A549 (cell line): ENCODE measurements at regions of chr7 and their contacts with region 1.

Region 1: GRCh38 chr7:28853834-28854749 is 104.0 kb downstream of the TRIL start:
- DNase-seq: peak; percentile 66 to 91
- ATAC-seq: peak; percentile 89 to 98
- H3K4me3 ChIP-seq: peak overlapping the region; percentile 52
- H3K27ac ChIP-seq: peak overlapping the region; percentile 66 to 81; a peak in 5 of 6 replicates
- H3K4me1 ChIP-seq: peaks cover 46% of the 10 kb centered on the region
- CTCF ChIP-seq: peak; percentile 88
- EP300 ChIP-seq: no peak
- POLR2A ChIP-seq: no peak
- RAD21 ChIP-seq: peak; percentile 66 to 87

Region 2: DNA sequence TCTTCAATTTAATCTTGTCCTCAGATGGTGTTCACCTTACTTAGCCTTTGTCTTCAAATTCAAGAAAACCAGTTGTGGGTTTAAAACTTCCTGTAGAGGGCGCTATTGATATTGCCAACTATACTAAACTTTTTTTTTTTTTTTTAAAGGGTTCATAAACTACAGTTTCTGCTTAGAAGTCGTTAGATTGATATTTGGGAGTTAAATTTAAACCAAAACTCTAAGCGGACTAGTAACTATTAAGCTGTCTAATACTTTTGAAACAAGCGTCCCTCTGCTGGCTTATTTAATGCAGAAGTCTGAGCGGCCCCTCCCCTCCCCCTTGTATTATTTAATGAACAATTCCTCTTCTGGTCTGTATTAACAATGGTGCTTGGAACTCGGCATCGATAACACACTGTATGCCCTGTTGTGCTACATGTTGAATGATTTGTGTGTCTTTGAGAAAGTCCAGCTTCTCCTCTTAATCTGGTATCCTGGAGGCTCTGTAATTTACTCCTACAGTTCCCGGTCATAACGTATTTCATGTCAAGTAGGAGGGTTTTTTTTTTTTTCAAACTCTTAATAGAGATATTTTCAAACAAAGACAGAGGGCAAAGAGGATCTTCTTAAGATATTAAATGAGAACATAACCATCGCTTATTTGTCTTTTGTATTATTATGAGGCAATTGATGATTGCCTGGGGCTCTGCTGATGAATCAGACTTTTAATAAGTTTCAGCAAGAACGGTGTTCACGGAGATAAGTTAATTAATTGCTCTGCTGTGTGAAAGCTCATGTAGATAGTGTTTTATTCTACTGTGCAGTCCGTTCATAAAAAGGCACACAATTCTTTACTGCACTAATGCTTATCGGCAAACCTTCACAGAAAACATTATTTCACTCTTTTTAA is 464.3 kb before region 1 on chr7:
- CTCF ChIA-PET with region 1: interaction called, 12 read pairs
- POLR2A ChIA-PET with region 1: no interaction called
- DNase-seq: peak in 1 of 2 experiments; percentile 65
- ATAC-seq: peak in 1 of 2 experiments; percentile 42; a peak in 2 of 6 replicates
- H3K4me3 ChIP-seq: peak overlapping the region; percentile 25; the same call in 2 of the 3 replicates
- H3K27ac ChIP-seq: no peak overlapping the region
- H3K4me1 ChIP-seq: 0 out of 3 replicates have a peak, but pooled peaks cover 4% of the 10 kb centered on the region
- CTCF ChIP-seq: peak; percentile 84
- EP300 ChIP-seq: no peak
- POLR2A ChIP-seq: no peak
- RAD21 ChIP-seq: peak; percentile 76 to 81

Region 3: GRCh38 chr7:28868712-28869111 is 14.6 kb after region 1 on chr7:
- CTCF ChIA-PET with region 1: interaction called, 12 read pairs
- POLR2A ChIA-PET with region 1: no interaction called
- DNase-seq: no peak
- ATAC-seq: no peak
- H3K4me3 ChIP-seq: no peak overlapping the region
- H3K27ac ChIP-seq: no peak overlapping the region
- H3K4me1 ChIP-seq: no peaks in the 10 kb centered on the region; the same call in 2 of the 3 replicates
- CTCF ChIP-seq: no peak
- EP300 ChIP-seq: no peak
- POLR2A ChIP-seq: no peak
- RAD21 ChIP-seq: no peak

Region 4: DNA sequence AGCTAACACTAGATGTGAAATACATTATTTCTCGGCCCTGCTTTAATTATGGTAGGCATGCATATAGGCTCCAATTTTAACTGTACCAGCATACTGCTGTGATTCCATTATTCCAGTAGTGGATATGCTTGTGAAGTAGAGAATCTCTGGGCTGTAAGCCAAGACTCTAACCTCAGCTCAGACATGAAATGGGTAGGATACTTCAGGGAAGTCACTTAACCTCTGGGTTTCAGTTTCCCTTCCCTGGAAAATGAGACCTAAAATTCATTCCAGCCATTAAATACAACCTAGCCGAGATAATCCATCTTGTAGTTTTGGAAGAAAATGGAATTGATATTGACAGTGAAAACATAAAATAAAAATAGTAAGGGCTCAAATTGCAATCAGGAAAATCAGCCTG is 163.6 kb after region 1 on chr7:
- CTCF ChIA-PET with region 1: no interaction called
- POLR2A ChIA-PET with region 1: no interaction called
- DNase-seq: no peak
- ATAC-seq: no peak
- H3K4me3 ChIP-seq: no peak overlapping the region
- H3K27ac ChIP-seq: no peak overlapping the region
- H3K4me1 ChIP-seq: no peaks in the 10 kb centered on the region
- CTCF ChIP-seq: no peak
- EP300 ChIP-seq: no peak
- POLR2A ChIP-seq: no peak
- RAD21 ChIP-seq: no peak